ENCODE measurements at regions of chr1 and their contacts with region 1.

Region 1: DNA sequence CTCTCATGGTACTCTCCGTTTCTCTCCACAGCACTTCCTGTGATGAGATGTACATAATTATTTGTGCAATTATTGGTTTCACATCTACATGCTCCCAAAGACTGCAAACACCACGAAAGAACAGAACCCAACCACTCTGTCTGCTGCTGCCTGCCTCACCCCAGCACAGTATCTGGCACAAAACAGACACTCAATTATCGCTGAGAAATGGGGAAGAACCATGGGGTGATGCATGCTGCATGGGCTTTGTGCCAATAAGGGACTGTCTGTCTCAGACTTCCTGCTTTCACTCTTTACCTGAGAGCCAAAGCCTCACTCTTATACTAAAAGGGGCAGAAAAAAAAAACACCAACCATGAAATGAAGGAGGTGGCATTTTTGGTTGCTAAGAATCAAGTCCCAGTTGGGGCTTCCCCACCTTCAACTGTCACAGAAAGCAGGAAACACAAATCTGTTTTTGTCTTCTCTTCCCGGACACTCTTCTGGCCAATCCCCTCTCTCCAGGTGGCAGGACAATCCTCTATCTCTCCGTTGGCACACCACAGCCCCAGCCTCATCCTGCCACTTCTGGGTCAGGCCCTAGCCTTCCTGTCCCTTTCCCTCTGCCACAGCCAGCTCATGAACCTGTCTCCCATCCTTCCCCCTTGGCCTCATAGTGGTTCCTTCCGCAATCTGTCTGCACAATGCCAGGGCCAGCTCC is 82.0 kb downstream of the TGFBR3 start:
- DNase-seq: peak; percentile 49 to 94 (median 68)
- ATAC-seq: peak; percentile 54
- H3K4me3 ChIP-seq: peak overlapping the region; percentile 40
- H3K4me3 Mint-ChIP-seq: peak overlapping the region; percentile 58
- H3K27ac ChIP-seq: peak overlapping the region; percentile 97 to 99
- H3K27ac Mint-ChIP-seq: peak overlapping the region; percentile 94
- H3K4me1 ChIP-seq: peaks cover 43% of the 10 kb centered on the region
- H3K4me1 Mint-ChIP-seq: peaks cover 40% of the 10 kb centered on the region
- H3K27me3 ChIP-seq: no peaks in the 10 kb centered on the region
- H3K27me3 Mint-ChIP-seq: no peaks in the 10 kb centered on the region
- CTCF ChIP-seq: no peak

Region 2: DNA sequence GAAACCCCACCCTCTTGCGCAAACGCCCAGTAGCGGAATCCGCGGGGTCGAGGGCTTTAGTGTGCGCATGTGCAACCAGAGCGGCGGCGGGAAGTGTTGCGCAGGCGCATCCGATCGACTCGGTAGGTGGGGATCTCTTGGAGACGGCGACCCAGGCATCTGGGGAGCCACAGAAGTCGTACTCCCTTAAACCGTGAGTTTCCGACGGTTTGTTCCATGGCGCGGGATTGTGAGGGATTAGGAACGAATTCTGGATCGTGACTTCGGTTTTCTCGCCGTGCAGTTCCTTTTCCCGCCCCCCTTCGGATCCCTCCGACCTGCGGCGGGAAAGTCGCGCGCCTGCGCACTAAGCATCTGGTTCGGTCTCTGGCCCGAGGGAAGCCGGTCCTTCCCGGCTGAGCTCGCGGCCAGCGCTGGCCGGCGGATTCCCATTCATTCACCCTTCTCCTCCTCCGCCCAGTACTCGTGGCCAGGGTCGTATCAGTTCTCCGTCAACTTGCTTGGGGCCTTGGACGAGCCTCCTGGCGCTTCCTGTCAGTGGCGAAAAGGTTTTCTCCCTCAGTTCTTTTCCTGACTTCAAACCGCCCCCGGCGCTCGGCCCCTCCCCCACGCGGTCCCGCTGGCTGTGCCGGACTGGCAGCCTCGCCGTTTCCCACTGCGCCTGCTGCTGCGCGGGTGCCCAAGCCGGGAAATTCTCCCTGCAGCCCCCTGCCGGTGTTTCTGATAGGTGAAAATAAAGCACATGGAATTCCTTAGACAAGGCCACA is 303.1 kb before region 1 on chr1 and contains the start of gene CDC7:
- CTCF ChIA-PET with region 1: interaction called, 3 read pairs
- POLR2A ChIA-PET with region 1: interaction called, 10 read pairs
- intact Hi-C with region 1: loop called in 1 of 2 experiments (anchors 10 kb)
- DNase-seq: peak; percentile 61 to 92 (median 80)
- ATAC-seq: peak; percentile 83
- H3K4me3 ChIP-seq: peak within 1 kb of the TSS; percentile 74
- H3K4me3 Mint-ChIP-seq: no peak within 1 kb of the TSS
- H3K27ac ChIP-seq: peak within 1 kb of the TSS; percentile 35 to 62
- H3K27ac Mint-ChIP-seq: no peak within 1 kb of the TSS
- H3K4me1 ChIP-seq: peaks cover 13% of the 10 kb centered on the region
- H3K4me1 Mint-ChIP-seq: peaks cover 31% of the 10 kb centered on the region
- H3K27me3 ChIP-seq: no peaks in the 10 kb centered on the region
- H3K27me3 Mint-ChIP-seq: no peaks in the 10 kb centered on the region
- CTCF ChIP-seq: peak; percentile 61
- total RNA-seq, gene CDC7: 4.2 to 4.8 TPM

Region 3: GRCh38 chr1:91768787-91769725 is 34.9 kb before region 1 on chr1:
- CTCF ChIA-PET with region 1: no interaction called
- POLR2A ChIA-PET with region 1: no interaction called
- intact Hi-C with region 1: no loop called
- DNase-seq: no peak
- ATAC-seq: no peak
- H3K4me3 ChIP-seq: no peak overlapping the region
- H3K4me3 Mint-ChIP-seq: no peak overlapping the region
- H3K27ac ChIP-seq: no peak overlapping the region
- H3K27ac Mint-ChIP-seq: no peak overlapping the region
- H3K4me1 ChIP-seq: no peaks in the 10 kb centered on the region
- H3K4me1 Mint-ChIP-seq: no peaks in the 10 kb centered on the region
- H3K27me3 ChIP-seq: no peaks in the 10 kb centered on the region
- H3K27me3 Mint-ChIP-seq: no peaks in the 10 kb centered on the region
- CTCF ChIP-seq: no peak

Region 4: DNA sequence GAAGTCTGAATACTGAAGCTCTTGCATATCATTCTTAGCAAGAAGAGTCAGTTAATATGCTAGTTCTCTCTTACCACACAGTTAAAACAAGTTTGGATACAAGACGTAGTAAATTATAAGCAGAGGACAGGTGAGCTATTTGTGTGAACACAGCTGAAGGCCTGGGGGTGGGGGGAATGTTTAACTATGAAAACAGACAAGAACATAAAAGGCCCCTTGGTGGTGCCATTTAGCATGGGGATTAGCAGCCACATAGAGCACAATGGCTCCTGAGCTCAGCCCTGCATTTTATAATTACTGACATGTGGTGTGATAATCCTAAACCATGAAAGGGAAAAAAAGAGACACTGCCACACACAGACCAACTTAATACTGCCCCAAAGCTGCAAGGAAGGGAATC is 12.9 kb before region 1 on chr1:
- CTCF ChIA-PET with region 1: no interaction called
- POLR2A ChIA-PET with region 1: interaction called, 13 read pairs
- intact Hi-C with region 1: no loop called
- DNase-seq: peak in 4 of 14 experiments; percentile 13 to 41 (median 33)
- ATAC-seq: peak; percentile 61
- H3K4me3 ChIP-seq: no peak overlapping the region
- H3K4me3 Mint-ChIP-seq: no peak overlapping the region
- H3K27ac ChIP-seq: no peak overlapping the region
- H3K27ac Mint-ChIP-seq: peak overlapping the region; percentile 2
- H3K4me1 ChIP-seq: peaks cover 13% of the 10 kb centered on the region
- H3K4me1 Mint-ChIP-seq: peaks cover 36% of the 10 kb centered on the region
- H3K27me3 ChIP-seq: no peaks in the 10 kb centered on the region
- H3K27me3 Mint-ChIP-seq: no peaks in the 10 kb centered on the region
- CTCF ChIP-seq: no peak

Region 5: GRCh38 chr1:91929250-91929649 is 125.3 kb after region 1 on chr1:
- CTCF ChIA-PET with region 1: no interaction called
- POLR2A ChIA-PET with region 1: no interaction called
- intact Hi-C with region 1: loop called in 1 of 2 experiments (anchors 5 kb)
- DNase-seq: no peak
- ATAC-seq: no peak
- H3K4me3 ChIP-seq: no peak overlapping the region
- H3K4me3 Mint-ChIP-seq: no peak overlapping the region
- H3K27ac ChIP-seq: no peak overlapping the region
- H3K27ac Mint-ChIP-seq: no peak overlapping the region
- H3K4me1 ChIP-seq: no peaks in the 10 kb centered on the region
- H3K4me1 Mint-ChIP-seq: no peaks in the 10 kb centered on the region
- H3K27me3 ChIP-seq: no peaks in the 10 kb centered on the region
- H3K27me3 Mint-ChIP-seq: no peaks in the 10 kb centered on the region
- CTCF ChIP-seq: no peak

Region 6: GRCh38 chr1:92536980-92537884 is 733.2 kb after region 1 on chr1:
- CTCF ChIA-PET with region 1: no interaction called
- POLR2A ChIA-PET with region 1: no interaction called
- intact Hi-C with region 1: loop called in 1 of 2 experiments (anchors 5 kb)
- DNase-seq: peak in 6 of 14 experiments; percentile 5 to 88 (median 53)
- ATAC-seq: peak; percentile 79
- H3K4me3 ChIP-seq: peak overlapping the region; percentile 25
- H3K4me3 Mint-ChIP-seq: peak overlapping the region; percentile 77
- H3K27ac ChIP-seq: peak overlapping the region; percentile 57 to 70
- H3K27ac Mint-ChIP-seq: peak overlapping the region; percentile 87
- H3K4me1 ChIP-seq: peaks cover 5% of the 10 kb centered on the region
- H3K4me1 Mint-ChIP-seq: peaks cover 78% of the 10 kb centered on the region
- H3K27me3 ChIP-seq: no peaks in the 10 kb centered on the region
- H3K27me3 Mint-ChIP-seq: no peaks in the 10 kb centered on the region
- CTCF ChIP-seq: no peak